ENCODE measurements at regions of chr16 and their contacts with region 1.

Region 1: DNA sequence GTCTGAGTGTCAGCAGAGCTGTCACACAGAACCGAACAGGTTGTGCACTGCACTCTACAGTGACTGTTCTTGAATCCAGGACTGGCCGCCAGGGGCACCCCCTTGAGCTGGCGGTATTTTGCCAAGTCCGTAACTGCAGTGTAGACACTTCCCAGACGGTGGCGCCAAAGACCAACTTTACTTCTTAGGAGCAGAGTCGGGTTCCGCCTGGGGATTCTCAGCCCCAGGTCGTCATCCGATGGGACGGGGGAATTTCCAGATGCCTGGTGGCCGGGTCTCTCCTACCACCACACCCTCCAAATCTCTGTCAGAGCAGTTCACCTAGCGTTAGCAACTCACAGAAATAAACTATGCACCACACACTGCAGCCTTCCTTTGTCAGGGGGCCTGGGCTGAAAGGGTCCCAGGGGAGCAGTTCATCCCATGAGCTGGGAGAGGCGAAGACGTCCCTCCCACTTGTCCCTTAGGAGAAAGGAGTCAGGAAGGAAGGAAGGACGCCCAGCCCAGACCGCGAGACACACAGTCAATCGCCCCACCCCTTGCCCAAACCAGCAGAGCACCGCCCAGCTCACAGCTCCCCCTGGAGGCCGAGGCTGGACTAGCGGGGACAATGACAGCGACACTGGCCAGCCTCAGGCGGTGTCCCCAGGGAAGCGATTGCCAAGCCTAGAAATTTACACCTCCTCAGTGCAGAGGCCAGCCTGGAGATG is 7.4 kb upstream of the RIPOR1 start:
- DNase-seq: peak; percentile 95
- ATAC-seq: peak; percentile 89
- H3K4me3 ChIP-seq: peak overlapping the region; percentile 63 to 84 (median 75)
- H3K27ac ChIP-seq: peak overlapping the region; percentile 37
- H3K4me1 ChIP-seq: peaks cover 54% of the 10 kb centered on the region
- H3K27me3 ChIP-seq: peaks cover 9 to 38% of the 10 kb centered on the region in 2 experiments; a peak in 4 of 5 replicates
- CTCF ChIP-seq: peak; percentile 88
- EP300 ChIP-seq: 0 out of 4 replicates have a peak, but pooled peaks of 1 of the 2 experiments have one; percentile 3
- POLR2A ChIP-seq: no peak
- RAD21 ChIP-seq: peak; percentile 94

Region 2: GRCh38 chr16:67372664-67373063 is 148.6 kb before region 1 on chr16:
- CTCF ChIA-PET with region 1: no interaction called
- POLR2A ChIA-PET with region 1: no interaction called
- in situ Hi-C with region 1: no loop called
- intact Hi-C with region 1: no loop called
- DNase-seq: no peak
- ATAC-seq: no peak
- H3K4me3 ChIP-seq: no peak overlapping the region
- H3K27ac ChIP-seq: no peak overlapping the region
- H3K4me1 ChIP-seq: peaks cover 33% of the 10 kb centered on the region
- H3K27me3 ChIP-seq: peaks cover 1 to 8% of the 10 kb centered on the region in 2 experiments; a peak in 1 of 5 replicates
- CTCF ChIP-seq: peak; percentile 32
- EP300 ChIP-seq: no peak
- POLR2A ChIP-seq: no peak
- RAD21 ChIP-seq: no peak; the same call in 1 of the 2 replicates

Region 3: DNA sequence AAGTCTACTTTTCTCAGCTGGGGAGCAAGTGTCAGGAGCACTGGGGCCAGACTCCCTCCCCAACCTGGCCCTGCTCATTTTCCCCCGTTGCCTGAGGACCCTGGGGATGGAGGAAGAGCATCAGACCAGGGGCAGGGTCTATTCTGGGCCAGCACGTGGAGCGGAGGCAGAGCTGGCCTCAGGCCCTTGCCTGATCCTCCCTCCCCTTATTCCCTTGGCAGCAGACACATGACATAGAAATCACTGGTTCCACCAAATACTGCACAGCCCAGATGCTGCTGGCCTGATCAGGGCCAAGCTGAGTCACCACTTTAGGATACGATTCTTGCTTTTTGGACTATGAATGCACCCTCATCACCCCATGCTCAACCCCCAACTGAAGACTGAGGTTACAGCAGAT is 22.1 kb before region 1 on chr16:
- CTCF ChIA-PET with region 1: interaction called, 17 read pairs
- POLR2A ChIA-PET with region 1: interaction called, 3 read pairs
- in situ Hi-C with region 1: no loop called
- intact Hi-C with region 1: no loop called
- DNase-seq: no peak
- ATAC-seq: no peak
- H3K4me3 ChIP-seq: no peak overlapping the region
- H3K27ac ChIP-seq: no peak overlapping the region
- H3K4me1 ChIP-seq: peaks cover 11% of the 10 kb centered on the region; the same call in 1 of the 2 replicates
- H3K27me3 ChIP-seq: no peaks in the 10 kb centered on the region
- CTCF ChIP-seq: no peak
- EP300 ChIP-seq: no peak
- POLR2A ChIP-seq: no peak
- RAD21 ChIP-seq: no peak

Region 4: DNA sequence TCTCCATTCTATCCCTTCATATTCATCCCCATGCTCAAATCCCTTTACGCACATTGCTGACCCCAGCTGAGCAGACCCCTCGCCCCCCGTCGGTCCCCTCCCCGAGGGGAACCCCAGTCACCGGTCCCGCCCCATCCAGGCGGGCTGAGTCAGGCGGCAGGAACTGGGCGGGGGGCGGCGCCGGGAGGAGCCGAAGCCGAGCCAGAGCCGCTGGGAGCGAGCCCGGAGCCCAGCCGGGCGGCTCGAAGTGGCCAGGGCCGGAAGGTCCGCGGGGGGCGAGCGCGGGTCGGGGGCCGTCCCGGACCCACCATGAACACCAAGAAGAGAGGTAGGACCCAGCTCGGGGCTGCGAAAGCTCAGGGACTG is 16.0 kb after region 1 on chr16:
- CTCF ChIA-PET with region 1: interaction called, 27 read pairs
- POLR2A ChIA-PET with region 1: no interaction called
- in situ Hi-C with region 1: no loop called
- intact Hi-C with region 1: no loop called
- DNase-seq: no peak
- ATAC-seq: peak; percentile 28
- H3K4me3 ChIP-seq: peak overlapping the region; percentile 59 to 76 (median 69); a peak in 5 of 6 replicates
- H3K27ac ChIP-seq: no peak overlapping the region
- H3K4me1 ChIP-seq: peaks cover 25% of the 10 kb centered on the region
- H3K27me3 ChIP-seq: no peaks in the 10 kb centered on the region
- CTCF ChIP-seq: no peak; the same call in 1 of the 2 replicates
- EP300 ChIP-seq: no peak
- POLR2A ChIP-seq: no peak
- RAD21 ChIP-seq: no peak

Region 5: DNA sequence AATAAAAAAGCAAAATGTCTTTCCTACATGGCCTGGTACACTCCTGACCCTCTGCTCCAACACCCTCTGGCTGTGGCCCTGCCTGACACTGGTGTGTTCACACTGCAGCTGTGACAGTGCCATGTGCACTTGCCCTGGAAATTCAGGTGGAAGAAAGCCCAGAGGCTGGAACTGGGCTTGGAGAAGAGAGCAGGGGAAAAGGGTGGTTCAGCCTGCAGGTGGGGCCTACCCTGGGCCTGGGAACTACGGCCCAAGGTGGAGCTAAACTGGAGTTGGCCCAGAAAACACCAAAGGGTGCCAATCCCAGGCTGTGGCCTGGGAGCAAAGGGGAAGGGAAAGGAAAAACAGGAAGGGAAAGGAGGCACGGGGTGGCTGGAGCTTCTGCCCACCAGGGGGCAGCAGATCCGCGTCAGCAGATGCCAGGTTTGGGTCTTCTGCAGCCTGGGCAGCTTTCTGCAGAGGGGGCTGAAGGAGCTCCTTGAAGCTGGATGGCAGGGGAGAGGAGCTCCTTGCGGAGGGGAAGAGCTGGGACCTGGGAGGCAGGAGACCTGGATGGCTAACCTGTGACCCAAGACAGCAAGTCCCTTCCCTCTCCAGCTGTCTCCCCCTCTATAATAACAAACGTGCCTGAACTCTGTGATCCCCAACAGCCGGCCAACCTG is 25.6 kb after region 1 on chr16:
- CTCF ChIA-PET with region 1: interaction called, 33 read pairs
- POLR2A ChIA-PET with region 1: interaction called, 4 read pairs
- in situ Hi-C with region 1: no loop called
- intact Hi-C with region 1: no loop called
- DNase-seq: peak; percentile 65
- ATAC-seq: peak; percentile 78
- H3K4me3 ChIP-seq: no peak overlapping the region
- H3K27ac ChIP-seq: peak overlapping the region; percentile 29
- H3K4me1 ChIP-seq: peaks cover 4% of the 10 kb centered on the region; the same call in 1 of the 2 replicates
- H3K27me3 ChIP-seq: no peaks in the 10 kb centered on the region
- CTCF ChIP-seq: peak; percentile 96
- EP300 ChIP-seq: no peak
- POLR2A ChIP-seq: no peak
- RAD21 ChIP-seq: peak; percentile 97

Region 6: GRCh38 chr16:67641779-67642708 is 120.8 kb after region 1 on chr16:
- CTCF ChIA-PET with region 1: interaction called, 52 read pairs
- POLR2A ChIA-PET with region 1: no interaction called
- in situ Hi-C with region 1: no loop called
- intact Hi-C with region 1: loop called (anchors 1 kb)
- DNase-seq: no peak
- ATAC-seq: peak; percentile 4
- H3K4me3 ChIP-seq: no peak overlapping the region
- H3K27ac ChIP-seq: no peak overlapping the region
- H3K4me1 ChIP-seq: peaks cover 17% of the 10 kb centered on the region
- H3K27me3 ChIP-seq: peaks cover 8 to 22% of the 10 kb centered on the region in 2 experiments
- CTCF ChIP-seq: no peak
- EP300 ChIP-seq: no peak
- POLR2A ChIP-seq: no peak
- RAD21 ChIP-seq: no peak

Region 7: GRCh38 chr16:67667817-67668494 is 146.7 kb after region 1 on chr16:
- CTCF ChIA-PET with region 1: interaction called, 118 read pairs
- POLR2A ChIA-PET with region 1: interaction called, 10 read pairs
- in situ Hi-C with region 1: no loop called
- intact Hi-C with region 1: loop called (anchors 1 kb)
- DNase-seq: peak; percentile 96
- ATAC-seq: peak; percentile 88
- H3K4me3 ChIP-seq: peak overlapping the region; percentile 77 to 96 (median 88)
- H3K27ac ChIP-seq: peak overlapping the region; percentile 21
- H3K4me1 ChIP-seq: peaks cover 39% of the 10 kb centered on the region
- H3K27me3 ChIP-seq: no peaks in the 10 kb centered on the region; a peak in 1 of 5 replicates
- CTCF ChIP-seq: peak; percentile 99
- EP300 ChIP-seq: no peak
- POLR2A ChIP-seq: peak in 1 of 2 experiments; percentile 24; a peak in 1 of 4 replicates
- RAD21 ChIP-seq: peak; percentile 98

Measured in HepG2 (cell line).